ENCODE measurements at regions of chr9 and their contacts with region 1.

Region 1: DNA sequence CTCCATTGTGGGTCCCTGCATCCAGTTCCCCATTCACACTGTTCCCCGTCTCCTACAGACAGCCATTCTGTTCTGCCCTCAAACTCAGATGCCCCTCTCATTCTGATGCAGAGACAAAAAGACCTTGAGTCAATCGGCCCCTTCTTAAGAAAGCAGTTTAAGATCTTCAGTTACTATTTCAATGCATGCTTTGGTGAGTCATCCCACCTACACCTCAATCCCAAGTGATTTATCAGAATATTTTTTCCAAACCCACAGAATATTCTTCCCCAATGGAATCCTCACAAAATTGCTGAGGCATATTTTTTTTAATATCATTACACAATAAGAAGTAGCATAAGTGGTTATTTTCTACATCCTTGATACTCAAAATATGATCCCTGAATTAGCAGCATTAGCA is 92.4 kb upstream of the SLC1A1 start:
- DNase-seq: no peak
- CTCF ChIP-seq: no peak

Region 2: GRCh38 chr9:4382722-4383317 is 15.1 kb before region 1 on chr9:
- CTCF ChIA-PET with region 1: interaction called, 25 read pairs
- POLR2A ChIA-PET with region 1: no interaction called
- DNase-seq: peak; percentile 25
- CTCF ChIP-seq: peak; percentile 50

Measured in GM10248 (cell line).